Activated CD4-positive, alpha-beta T cell treated with anti-CD3 and anti-CD28 coated beads for 36 hours (primary cell): ENCODE measurements at regions of chr7 and their contacts with region 1.

Region 1: GRCh38 chr7:66837007-66837406 is 84.0 kb upstream of the TMEM248 start:
- DNase-seq: peak; percentile 81
- ATAC-seq: peak; percentile 94
- H3K4me3 Mint-ChIP-seq: no peak overlapping the region
- H3K27ac Mint-ChIP-seq: no peak overlapping the region
- H3K4me1 Mint-ChIP-seq: no peaks in the 10 kb centered on the region
- H3K27me3 Mint-ChIP-seq: no peaks in the 10 kb centered on the region

Region 2: GRCh38 chr7:66591799-66592596 is 245.0 kb before region 1 on chr7:
- CTCF ChIA-PET with region 1: no interaction called
- POLR2A ChIA-PET with region 1: no interaction called
- intact Hi-C with region 1: no loop called
- DNase-seq: peak; percentile 96
- ATAC-seq: peak; percentile 98
- H3K4me3 Mint-ChIP-seq: peak overlapping the region; percentile 94
- H3K27ac Mint-ChIP-seq: peak overlapping the region; percentile 98
- H3K4me1 Mint-ChIP-seq: peaks cover 46% of the 10 kb centered on the region
- H3K27me3 Mint-ChIP-seq: no peaks in the 10 kb centered on the region

Region 3: DNA sequence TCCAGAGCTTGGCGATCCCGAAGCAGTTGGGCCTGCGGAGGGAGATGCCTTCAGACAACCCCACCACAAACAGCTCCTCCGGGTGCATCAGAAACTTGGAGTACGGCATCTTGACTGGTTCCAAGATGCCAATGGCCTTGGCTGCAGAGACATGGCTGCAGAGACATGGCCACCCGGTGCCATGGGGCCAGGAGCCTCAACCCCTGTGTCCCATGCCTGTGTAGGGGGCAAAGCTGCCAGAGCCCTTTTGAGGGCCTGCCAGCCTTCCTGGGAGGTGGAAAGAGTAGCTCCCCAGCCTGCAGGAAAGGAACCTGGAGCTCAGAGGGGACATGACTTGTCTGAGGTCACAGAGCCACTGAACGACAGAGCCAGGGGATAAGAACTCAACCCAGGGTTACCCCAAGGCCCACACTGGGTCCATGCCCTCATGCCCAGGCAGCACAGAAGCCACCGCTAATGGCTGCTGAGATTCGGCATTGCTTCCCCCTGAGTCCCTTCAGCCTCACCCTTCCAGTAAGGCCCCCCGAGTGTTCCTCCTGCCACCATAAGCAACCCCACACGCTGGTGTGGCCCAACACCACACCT is 12.9 kb before region 1 on chr7:
- CTCF ChIA-PET with region 1: no interaction called
- POLR2A ChIA-PET with region 1: no interaction called
- intact Hi-C with region 1: no loop called
- DNase-seq: no peak
- ATAC-seq: no peak
- H3K4me3 Mint-ChIP-seq: no peak overlapping the region
- H3K27ac Mint-ChIP-seq: no peak overlapping the region
- H3K4me1 Mint-ChIP-seq: no peaks in the 10 kb centered on the region
- H3K27me3 Mint-ChIP-seq: no peaks in the 10 kb centered on the region

Region 4: GRCh38 chr7:66859794-66860645 is 23.0 kb after region 1 on chr7:
- CTCF ChIA-PET with region 1: interaction called, 3 read pairs
- POLR2A ChIA-PET with region 1: interaction called, 4 read pairs
- intact Hi-C with region 1: loop called in 1 of 2 experiments (anchors 2 kb)
- DNase-seq: peak; percentile 78
- ATAC-seq: peak; percentile 98
- H3K4me3 Mint-ChIP-seq: peak overlapping the region; percentile 35
- H3K27ac Mint-ChIP-seq: peak overlapping the region; percentile 92
- H3K4me1 Mint-ChIP-seq: peaks cover 22% of the 10 kb centered on the region
- H3K27me3 Mint-ChIP-seq: no peaks in the 10 kb centered on the region

Region 5: GRCh38 chr7:66894463-66895080 is 57.6 kb after region 1 on chr7:
- CTCF ChIA-PET with region 1: no interaction called
- POLR2A ChIA-PET with region 1: no interaction called
- intact Hi-C with region 1: loop called in 1 of 2 experiments (anchors 1 kb)
- DNase-seq: peak; percentile 27
- ATAC-seq: peak; percentile 85
- H3K4me3 Mint-ChIP-seq: no peak overlapping the region
- H3K27ac Mint-ChIP-seq: no peak overlapping the region
- H3K4me1 Mint-ChIP-seq: no peaks in the 10 kb centered on the region
- H3K27me3 Mint-ChIP-seq: no peaks in the 10 kb centered on the region